Activated CD8-positive, alpha-beta T cell treated with anti-CD3 and anti-CD28 coated beads for 36 hours (primary cell): ENCODE measurements at regions of chr3 and their contacts with region 1.

Region 1: DNA sequence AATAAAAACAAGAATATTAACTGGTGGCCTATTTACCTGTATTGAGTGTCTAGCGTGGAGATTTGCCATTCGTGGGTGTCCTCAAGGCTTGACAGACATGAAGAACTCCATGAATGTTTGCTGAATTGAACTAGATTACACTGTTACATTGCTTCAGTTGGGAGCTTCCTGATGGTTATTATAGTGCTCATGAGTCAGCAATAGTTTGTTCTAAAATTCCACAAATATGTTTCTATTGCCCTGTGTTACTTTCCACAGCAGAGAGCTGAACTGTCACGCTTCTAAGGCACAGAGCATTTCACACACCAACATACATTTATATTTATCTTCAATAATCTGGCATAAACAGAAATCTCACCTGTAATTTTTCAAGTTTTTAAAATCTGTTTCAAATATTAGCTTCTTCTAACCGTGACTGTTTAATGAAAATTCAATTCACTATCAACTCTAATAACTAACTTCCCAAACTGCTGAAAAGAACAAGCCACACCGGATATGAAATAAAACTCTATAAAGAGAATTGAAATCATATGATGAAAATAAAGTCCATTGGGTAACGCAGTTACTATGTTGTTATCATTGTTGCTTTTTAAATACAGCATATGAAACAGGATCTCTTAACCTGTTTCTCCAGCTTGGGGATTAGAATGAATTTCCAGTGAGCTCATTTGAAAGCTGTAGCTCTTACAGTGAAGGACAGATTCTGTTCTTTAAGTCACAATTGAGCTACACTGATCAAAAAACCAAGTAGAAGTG is 61.2 kb upstream of the MCF2L2 start:
- DNase-seq: no peak
- ATAC-seq: no peak
- H3K4me3 Mint-ChIP-seq: no peak overlapping the region
- H3K27ac Mint-ChIP-seq: no peak overlapping the region
- H3K4me1 Mint-ChIP-seq: peaks cover 5% of the 10 kb centered on the region
- H3K27me3 Mint-ChIP-seq: no peaks in the 10 kb centered on the region
- CTCF ChIP-seq: no peak

Region 2: GRCh38 chr3:183477801-183478456 is 11.7 kb before region 1 on chr3:
- CTCF ChIA-PET with region 1: interaction called, 16 read pairs
- POLR2A ChIA-PET with region 1: interaction called, 3 read pairs
- intact Hi-C with region 1: no loop called
- DNase-seq: no peak
- ATAC-seq: no peak
- H3K4me3 Mint-ChIP-seq: no peak overlapping the region
- H3K27ac Mint-ChIP-seq: no peak overlapping the region
- H3K4me1 Mint-ChIP-seq: no peaks in the 10 kb centered on the region
- H3K27me3 Mint-ChIP-seq: no peaks in the 10 kb centered on the region
- CTCF ChIP-seq: no peak